ENCODE measurements at regions of chr9 and their contacts with region 1.

Region 1: DNA sequence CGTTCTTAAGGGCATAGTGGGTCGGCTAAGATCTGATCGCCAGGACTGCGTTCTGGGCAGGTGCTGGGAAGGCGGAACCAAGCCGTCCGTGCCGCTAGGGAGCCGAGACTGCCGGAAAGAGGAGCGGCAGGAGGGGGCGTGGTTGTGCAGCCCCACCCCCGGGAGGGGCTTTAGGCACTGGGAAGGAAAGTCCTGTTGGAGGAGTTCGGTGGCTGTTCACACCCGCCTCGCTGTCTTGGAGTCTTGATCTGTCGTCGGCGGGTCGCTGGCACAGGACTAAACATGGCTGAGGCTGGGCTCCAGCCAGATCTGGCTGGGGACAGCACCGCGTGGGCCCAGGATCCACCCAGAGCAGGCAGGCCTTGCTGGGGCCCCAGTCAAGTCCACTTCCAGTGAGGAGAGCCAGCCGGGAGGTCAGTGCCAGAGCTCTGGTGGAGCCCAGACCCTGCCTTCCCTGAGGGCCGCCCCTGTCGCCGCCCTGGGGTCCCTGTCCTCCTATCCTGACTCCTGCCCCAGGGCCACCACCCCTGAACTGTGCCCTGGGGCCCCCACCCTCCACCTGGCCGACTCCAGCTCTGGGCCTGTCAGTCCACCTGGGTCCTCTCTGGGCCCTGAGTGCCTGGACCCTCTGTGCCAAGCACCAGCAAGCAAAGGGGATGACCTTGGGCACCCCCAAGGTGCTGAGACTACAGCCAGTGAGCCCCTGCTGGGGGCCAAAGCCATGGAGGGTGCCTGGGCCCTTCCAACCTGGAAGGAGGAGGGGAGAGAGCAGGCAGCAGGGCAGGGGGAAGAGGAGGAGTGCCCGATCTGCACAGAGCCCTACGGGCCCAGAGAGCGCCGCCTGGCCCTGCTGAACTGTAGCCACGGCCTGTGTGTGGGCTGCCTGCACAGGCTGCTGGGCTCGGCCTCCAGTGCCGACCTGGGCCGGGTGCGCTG is 4.5 kb downstream of the RNF208 start:
- DNase-seq: no peak
- ATAC-seq: no peak
- H3K4me3 Mint-ChIP-seq: no peak overlapping the region
- H3K27ac Mint-ChIP-seq: no peak overlapping the region
- H3K4me1 Mint-ChIP-seq: peaks cover 2% of the 10 kb centered on the region
- H3K27me3 Mint-ChIP-seq: no peaks in the 10 kb centered on the region
- CTCF ChIP-seq: no peak

Region 2: DNA sequence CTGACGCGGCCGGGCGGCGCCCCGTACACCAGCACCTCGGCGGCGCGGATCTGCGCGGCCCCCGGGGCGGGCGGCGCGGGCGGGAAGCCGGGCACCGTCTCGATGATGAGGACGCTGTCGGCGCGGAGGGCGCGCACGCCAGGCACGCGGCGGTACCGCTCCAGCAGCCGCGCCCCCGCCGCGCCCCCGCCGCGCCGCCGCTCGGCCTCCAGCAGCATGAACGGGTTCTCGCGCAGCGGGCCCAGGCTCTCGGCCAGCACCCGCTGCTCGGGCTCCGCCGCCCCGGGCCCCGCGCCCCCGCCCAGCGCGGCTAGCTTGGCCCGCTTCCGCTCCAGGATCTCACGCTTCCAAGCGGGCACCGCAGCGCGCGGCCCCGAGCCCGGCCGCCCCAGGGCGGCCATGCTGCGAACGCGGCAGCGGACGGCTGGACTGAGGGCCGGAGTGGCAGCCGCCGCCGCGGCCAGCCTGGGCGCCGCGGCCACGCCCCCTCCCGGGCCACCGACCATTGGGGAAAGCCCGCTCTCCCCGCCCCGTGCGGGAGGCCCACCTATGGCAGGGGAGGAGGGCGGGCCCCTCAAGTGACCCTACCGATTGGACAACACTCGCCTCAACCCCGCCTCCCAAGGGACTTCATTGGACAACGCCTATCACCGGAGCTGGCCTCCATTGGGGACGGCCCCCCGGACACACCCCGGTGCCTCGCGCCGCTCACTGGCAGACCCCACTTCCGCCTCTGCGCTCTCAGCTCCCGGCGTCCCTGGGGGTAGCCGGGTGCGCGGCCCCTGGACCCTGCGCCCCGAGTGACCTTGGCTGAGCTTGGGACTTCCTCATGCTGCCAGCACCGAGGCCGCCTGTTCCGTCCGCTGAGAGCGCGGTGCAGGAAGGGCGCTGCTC is 17.0 kb before region 1 on chr9 and contains the start of gene TPRN:
- CTCF ChIA-PET with region 1: no interaction called
- POLR2A ChIA-PET with region 1: interaction called, 44 read pairs
- intact Hi-C with region 1: no loop called
- DNase-seq: peak; percentile 99
- ATAC-seq: peak; percentile 98
- H3K4me3 Mint-ChIP-seq: peak within 1 kb of the TSS; percentile 82
- H3K27ac Mint-ChIP-seq: peak within 1 kb of the TSS; percentile 77
- H3K4me1 Mint-ChIP-seq: peaks cover 22% of the 10 kb centered on the region
- H3K27me3 Mint-ChIP-seq: no peaks in the 10 kb centered on the region
- CTCF ChIP-seq: no peak
- total RNA-seq, gene TPRN: 5.7 to 6.6 TPM

Region 3: GRCh38 chr9:137311171-137311985 is 93.8 kb after region 1 on chr9:
- CTCF ChIA-PET with region 1: no interaction called
- POLR2A ChIA-PET with region 1: no interaction called
- intact Hi-C with region 1: no loop called
- DNase-seq: peak; percentile 47
- ATAC-seq: peak; percentile 34
- H3K4me3 Mint-ChIP-seq: no peak overlapping the region
- H3K27ac Mint-ChIP-seq: no peak overlapping the region
- H3K4me1 Mint-ChIP-seq: peaks cover 6% of the 10 kb centered on the region
- H3K27me3 Mint-ChIP-seq: no peaks in the 10 kb centered on the region
- CTCF ChIP-seq: no peak